Activated CD8-positive, alpha-beta T cell treated with anti-CD3 and anti-CD28 coated beads for 36 hours (primary cell): ENCODE measurements at regions of chr1 and their contacts with region 1.

Region 1: GRCh38 chr1:226608699-226609505 is 60.3 kb downstream of the STUM start:
- DNase-seq: peak; percentile 79
- ATAC-seq: peak; percentile 82
- H3K4me3 Mint-ChIP-seq: no peak overlapping the region
- H3K27ac Mint-ChIP-seq: no peak overlapping the region
- H3K4me1 Mint-ChIP-seq: no peaks in the 10 kb centered on the region
- H3K27me3 Mint-ChIP-seq: no peaks in the 10 kb centered on the region
- CTCF ChIP-seq: peak; percentile 96

Region 2: GRCh38 chr1:226424228-226425003 is 184.5 kb before region 1 on chr1:
- CTCF ChIA-PET with region 1: interaction called, 10 read pairs
- POLR2A ChIA-PET with region 1: no interaction called
- intact Hi-C with region 1: no loop called
- DNase-seq: peak; percentile 29
- ATAC-seq: peak; percentile 54
- H3K4me3 Mint-ChIP-seq: no peak overlapping the region
- H3K27ac Mint-ChIP-seq: no peak overlapping the region
- H3K4me1 Mint-ChIP-seq: peaks cover 27% of the 10 kb centered on the region
- H3K27me3 Mint-ChIP-seq: no peaks in the 10 kb centered on the region
- CTCF ChIP-seq: peak; percentile 74

Region 3: DNA sequence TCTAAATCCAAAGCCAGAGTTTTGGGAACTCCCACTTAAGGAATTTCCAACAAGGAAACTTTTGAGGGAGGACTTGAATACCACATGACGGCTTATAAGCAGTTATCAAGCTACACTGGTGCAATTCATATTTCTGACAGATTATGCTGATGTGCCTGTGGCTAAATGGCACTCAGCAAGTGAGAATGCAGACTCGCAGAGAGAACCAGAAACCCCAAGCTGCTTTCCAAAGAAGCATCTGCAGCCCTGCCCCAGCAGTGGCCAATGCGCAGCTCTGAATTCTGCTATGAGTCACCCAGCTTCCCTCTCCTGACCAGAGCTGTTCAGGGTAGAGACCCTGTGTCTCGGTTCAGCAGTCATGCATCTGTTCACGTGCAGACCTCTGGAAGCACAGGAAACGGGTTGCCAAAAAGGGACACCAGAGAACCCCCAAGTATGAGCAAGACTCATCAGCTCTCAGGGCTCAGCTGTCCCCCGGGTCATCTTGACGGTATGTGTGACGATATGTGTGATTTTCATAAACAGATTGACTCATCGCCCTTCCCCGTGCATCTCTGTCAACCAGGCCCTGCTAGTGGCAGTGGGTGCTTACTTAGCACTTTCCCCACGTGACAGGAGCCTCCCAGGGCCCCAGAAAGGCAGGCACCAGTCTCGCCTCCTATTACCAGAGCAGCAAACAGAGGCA is 53.9 kb after region 1 on chr1:
- CTCF ChIA-PET with region 1: no interaction called
- POLR2A ChIA-PET with region 1: no interaction called
- intact Hi-C with region 1: no loop called
- DNase-seq: peak; percentile 96
- ATAC-seq: peak; percentile 91
- H3K4me3 Mint-ChIP-seq: peak overlapping the region; percentile 49
- H3K27ac Mint-ChIP-seq: peak overlapping the region; percentile 96
- H3K4me1 Mint-ChIP-seq: peaks cover 98% of the 10 kb centered on the region
- H3K27me3 Mint-ChIP-seq: no peaks in the 10 kb centered on the region
- CTCF ChIP-seq: no peak